AG04449 (cell line): ENCODE measurements at regions of chr15 and their contacts with region 1.

Region 1: DNA sequence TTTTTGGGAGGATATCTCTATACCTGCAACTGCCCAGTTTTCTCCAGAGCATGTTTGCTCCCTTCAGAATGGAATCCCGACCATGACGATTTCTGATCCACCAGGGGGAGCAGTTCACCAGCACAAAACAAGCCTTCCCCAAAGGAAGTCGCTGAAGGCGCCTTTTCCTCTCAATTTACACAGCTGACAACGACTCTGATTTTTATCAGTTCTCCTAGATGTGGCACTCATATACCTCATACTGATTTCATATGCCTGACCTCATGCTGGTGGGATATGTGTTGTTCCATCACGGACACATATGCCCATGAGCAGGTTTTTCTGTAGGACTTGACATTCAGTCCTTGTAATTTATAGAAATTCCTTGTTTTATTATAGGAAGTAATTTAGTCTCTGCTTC is 1028.2 kb downstream of the MCTP2 start:
- DNase-seq: no peak
- H3K4me3 ChIP-seq: no peak overlapping the region
- CTCF ChIP-seq: peak; percentile 68

Region 2: GRCh38 chr15:95277266-95277665 is 17.8 kb after region 1 on chr15:
- CTCF ChIA-PET with region 1: interaction called, 4 read pairs
- POLR2A ChIA-PET with region 1: interaction called, 11 read pairs
- DNase-seq: peak; percentile 86
- H3K4me3 ChIP-seq: no peak overlapping the region
- CTCF ChIP-seq: no peak

Region 3: GRCh38 chr15:95291898-95292472 is 32.5 kb after region 1 on chr15:
- CTCF ChIA-PET with region 1: interaction called, 17 read pairs
- POLR2A ChIA-PET with region 1: no interaction called
- DNase-seq: no peak
- H3K4me3 ChIP-seq: no peak overlapping the region
- CTCF ChIP-seq: peak; percentile 55

Region 4: DNA sequence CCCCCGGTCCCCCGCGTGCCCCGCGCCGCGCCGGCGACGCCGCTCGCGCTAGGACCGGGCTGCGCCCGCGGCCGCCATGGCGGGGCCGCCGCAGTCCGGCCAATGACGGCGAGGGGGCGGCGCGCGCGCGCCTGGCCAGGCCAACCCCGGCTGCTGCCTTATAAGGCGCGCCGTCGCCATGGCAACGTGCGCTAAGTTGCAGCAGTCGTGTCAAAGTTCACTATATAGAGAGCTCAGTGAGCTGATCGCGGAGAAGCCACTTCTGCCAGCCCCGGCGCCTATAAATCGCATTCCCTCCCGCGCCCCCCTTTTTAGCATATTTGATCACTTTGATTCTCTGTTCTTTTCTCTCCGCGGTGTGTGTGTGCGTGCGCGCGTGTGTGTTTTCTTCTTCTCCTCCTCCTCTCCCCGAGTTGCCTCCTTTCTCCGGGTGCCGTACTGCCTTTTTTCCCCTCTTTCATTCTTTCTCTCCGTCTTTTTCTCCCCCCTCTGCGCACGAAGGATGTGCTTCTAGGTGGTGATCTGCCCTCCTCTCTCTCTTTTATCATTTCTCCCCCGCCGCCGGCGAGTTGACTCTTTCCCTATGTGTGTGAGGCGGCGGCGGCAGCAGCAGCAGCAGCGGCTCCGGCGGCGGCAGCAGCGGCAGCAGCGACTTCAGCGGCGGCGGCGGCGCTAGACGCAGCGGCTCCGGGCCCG is 1071.1 kb after region 1 on chr15 and contains the start of gene NR2F2:
- CTCF ChIA-PET with region 1: interaction called, 11 read pairs
- POLR2A ChIA-PET with region 1: interaction called, 4 read pairs
- DNase-seq: peak; percentile 94
- H3K4me3 ChIP-seq: peak within 1 kb of the TSS; percentile 96
- CTCF ChIP-seq: no peak

Region 5: GRCh38 chr15:96345560-96346399 is 1086.3 kb after region 1 on chr15:
- CTCF ChIA-PET with region 1: interaction called, 16 read pairs
- POLR2A ChIA-PET with region 1: no interaction called
- DNase-seq: no peak
- H3K4me3 ChIP-seq: peak overlapping the region; percentile 36
- CTCF ChIP-seq: peak; percentile 64

Region 6: DNA sequence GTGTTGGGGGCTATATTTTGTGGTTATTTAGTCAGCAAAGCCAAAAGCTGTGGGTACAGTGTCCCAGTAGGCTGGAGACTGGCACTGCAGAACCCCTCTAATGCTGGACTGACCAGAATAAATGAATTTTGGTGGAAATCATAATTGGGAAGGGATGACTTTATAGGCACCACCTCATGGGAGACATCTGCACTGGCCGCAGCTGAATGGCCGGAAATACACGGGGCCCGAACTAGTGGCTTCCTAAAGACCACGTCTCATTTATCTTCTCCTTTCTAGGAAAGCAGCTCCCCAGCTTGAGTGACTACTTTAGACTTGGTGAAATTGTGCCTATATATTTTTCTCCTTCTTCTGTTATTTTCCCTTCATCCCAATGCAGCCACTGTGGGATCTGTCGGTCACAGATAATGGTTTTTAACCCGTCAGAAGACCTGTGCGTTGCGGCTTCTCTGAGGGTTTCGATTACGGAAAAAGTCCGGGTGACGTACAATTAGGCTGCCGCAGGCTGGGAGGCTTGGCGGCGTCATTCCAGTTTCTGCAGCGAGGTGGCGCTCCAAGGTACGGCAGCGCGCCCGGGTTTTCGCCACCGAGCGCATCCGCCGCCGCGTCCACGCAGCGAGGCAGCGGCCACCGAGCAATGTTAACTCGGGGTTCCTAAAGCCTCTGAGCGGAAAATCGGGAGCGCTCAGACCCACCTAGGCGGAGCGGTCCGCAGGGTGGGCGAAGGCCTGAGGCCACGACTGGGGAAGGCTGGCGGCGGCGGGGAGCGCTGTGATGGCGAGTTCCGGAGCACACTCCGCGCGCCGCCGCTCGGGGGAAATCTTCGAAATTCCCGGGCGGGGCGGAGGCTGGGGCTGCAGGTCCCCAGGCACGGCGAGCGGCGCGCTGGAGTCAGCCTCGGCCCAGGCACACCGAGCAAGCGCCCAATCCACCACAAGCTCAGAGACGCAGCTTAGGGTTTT is 1097.3 kb after region 1 on chr15:
- CTCF ChIA-PET with region 1: interaction called, 12 read pairs
- POLR2A ChIA-PET with region 1: no interaction called
- DNase-seq: no peak
- H3K4me3 ChIP-seq: peak overlapping the region; percentile 78
- CTCF ChIP-seq: peak; percentile 95

Region 7: GRCh38 chr15:97248376-97248775 is 1988.9 kb after region 1 on chr15:
- CTCF ChIA-PET with region 1: interaction called, 13 read pairs
- POLR2A ChIA-PET with region 1: no interaction called
- DNase-seq: no peak
- H3K4me3 ChIP-seq: no peak overlapping the region
- CTCF ChIP-seq: no peak